ENCODE measurements at regions of chr20 and their contacts with region 1.

Region 1: DNA sequence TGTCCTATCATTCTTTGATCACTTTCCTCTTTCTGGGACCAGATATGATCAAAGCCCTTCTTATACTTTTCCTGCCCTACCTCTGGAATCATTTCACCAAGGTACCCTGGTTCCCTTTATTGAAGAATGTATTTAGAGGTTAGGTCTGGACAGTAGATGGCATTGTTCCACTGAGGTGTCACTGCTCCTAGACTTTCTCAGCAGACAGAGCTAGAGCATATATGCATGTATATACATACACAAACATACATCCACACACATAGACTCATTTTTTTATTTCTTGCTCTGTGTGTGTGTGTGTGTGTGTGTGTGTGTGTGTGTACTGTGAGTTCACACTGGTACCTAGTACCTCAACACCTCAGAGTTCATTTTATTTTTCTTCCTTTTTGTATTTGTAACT is 40.9 kb downstream of the PTPRA start:
- DNase-seq: no peak
- ATAC-seq: no peak
- H3K4me3 ChIP-seq: no peak overlapping the region
- H3K4me3 Mint-ChIP-seq: no peak overlapping the region
- H3K27ac ChIP-seq: no peak overlapping the region
- H3K27ac Mint-ChIP-seq: no peak overlapping the region
- H3K4me1 ChIP-seq: no peaks in the 10 kb centered on the region
- H3K4me1 Mint-ChIP-seq: peaks cover 12 to 40% (median 16%) of the 10 kb centered on the region in 7 donors
- H3K27me3 ChIP-seq: no peaks in the 10 kb centered on the region
- H3K27me3 Mint-ChIP-seq: no peaks in the 10 kb centered on the region

Region 2: GRCh38 chr20:2972126-2972525 is 58.0 kb after region 1 on chr20:
- CTCF ChIA-PET with region 1: no interaction called
- POLR2A ChIA-PET with region 1: no interaction called
- intact Hi-C with region 1: loop called in 1 of 2 experiments (anchors 10 kb)
- DNase-seq: no peak
- ATAC-seq: no peak
- H3K4me3 ChIP-seq: no peak overlapping the region
- H3K4me3 Mint-ChIP-seq: no peak overlapping the region
- H3K27ac ChIP-seq: no peak overlapping the region
- H3K27ac Mint-ChIP-seq: no peak overlapping the region
- H3K4me1 ChIP-seq: no peaks in the 10 kb centered on the region
- H3K4me1 Mint-ChIP-seq: peaks cover 0 to 12% (median 8%) of the 10 kb centered on the region in 7 donors
- H3K27me3 ChIP-seq: no peaks in the 10 kb centered on the region
- H3K27me3 Mint-ChIP-seq: no peaks in the 10 kb centered on the region

Measured in naive thymus-derived CD4-positive, alpha-beta T cell (primary cell).